Activated CD4-positive, alpha-beta T cell treated with anti-CD3 and anti-CD28 coated beads, Interleukin-2, amount 10 ng/mL, durations not matched to agents 24 days and 14 days (primary cell): ENCODE measurements at regions of chr6 and their contacts with region 1.

Region 1: DNA sequence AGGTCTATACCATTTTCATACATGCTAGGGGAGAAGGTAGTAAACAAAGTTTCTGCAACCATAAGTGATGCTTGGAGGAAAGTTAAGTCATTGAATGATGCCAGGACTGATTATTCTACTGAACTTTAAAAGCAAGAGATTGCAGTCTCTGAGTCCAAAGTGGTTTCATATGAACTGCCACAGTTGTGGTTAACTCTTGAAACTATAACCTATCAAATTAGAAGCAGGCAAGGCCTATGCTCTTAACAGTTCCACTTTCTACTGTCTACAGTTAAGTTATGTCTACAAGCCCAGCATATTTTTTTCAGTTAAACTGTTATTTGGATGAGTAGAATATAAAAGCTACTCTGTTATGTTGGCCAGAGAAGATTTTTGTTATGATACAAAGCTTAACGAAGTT is 326.5 kb upstream of the RUNX2 start:
- DNase-seq: peak; percentile 78
- H3K4me3 Mint-ChIP-seq: peak overlapping the region; percentile 39
- H3K27ac Mint-ChIP-seq: peak overlapping the region; percentile 84
- H3K4me1 Mint-ChIP-seq: peaks cover 29% of the 10 kb centered on the region
- H3K27me3 Mint-ChIP-seq: no peaks in the 10 kb centered on the region

Region 2: DNA sequence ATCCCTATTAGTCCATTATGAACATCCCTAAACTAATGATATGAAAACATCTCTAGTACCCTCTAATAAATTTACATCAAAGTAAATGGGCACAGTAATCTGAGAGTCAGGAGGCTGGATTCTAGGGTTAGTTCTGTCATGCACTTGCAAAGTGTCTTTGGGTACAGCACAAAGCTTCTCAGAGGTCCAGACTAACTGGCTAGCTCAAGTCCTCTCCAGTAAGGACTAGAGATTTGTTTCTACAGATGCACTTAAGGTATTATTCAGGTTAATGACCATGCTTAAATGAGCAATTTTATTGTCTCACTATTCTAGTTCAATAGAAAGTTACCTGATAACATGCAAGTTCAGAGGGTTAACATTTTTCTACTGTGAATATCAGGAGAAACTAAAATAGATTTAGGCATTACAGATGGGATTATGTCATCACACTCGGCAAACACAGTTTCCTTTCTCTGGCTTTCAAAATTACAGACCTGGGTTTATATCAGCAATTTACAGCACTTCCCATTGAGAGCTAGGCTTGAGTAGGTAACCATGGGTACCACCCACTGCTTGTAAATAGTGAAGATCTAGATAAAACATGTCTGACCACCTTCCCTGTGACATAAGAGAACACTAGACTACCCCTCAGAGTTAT is 76.4 kb before region 1 on chr6:
- intact Hi-C with region 1: loop called (anchors 5 kb)
- DNase-seq: peak; percentile 83
- H3K4me3 Mint-ChIP-seq: peak overlapping the region; percentile 68
- H3K27ac Mint-ChIP-seq: peak overlapping the region; percentile 74
- H3K4me1 Mint-ChIP-seq: peaks cover 46% of the 10 kb centered on the region
- H3K27me3 Mint-ChIP-seq: no peaks in the 10 kb centered on the region

Region 3: GRCh38 chr6:45289751-45290514 is 288.3 kb after region 1 on chr6:
- intact Hi-C with region 1: no loop called
- DNase-seq: peak; percentile 39
- H3K4me3 Mint-ChIP-seq: no peak overlapping the region
- H3K27ac Mint-ChIP-seq: no peak overlapping the region
- H3K4me1 Mint-ChIP-seq: peaks cover 29% of the 10 kb centered on the region
- H3K27me3 Mint-ChIP-seq: no peaks in the 10 kb centered on the region